ENCODE measurements at regions of chr17 and their contacts with region 1.

Region 1: GRCh38 chr17:57995076-57995956 is 7.3 kb upstream of the VEZF1 start:
- DNase-seq: peak; percentile 73 to 74
- H3K4me3 ChIP-seq: no peak overlapping the region
- H3K27ac ChIP-seq: no peak overlapping the region
- H3K4me1 ChIP-seq: peaks cover 0 to 16% of the 10 kb centered on the region in 2 donors
- H3K27me3 ChIP-seq: no peaks in the 10 kb centered on the region
- CTCF ChIP-seq: peak in 5 of 6 experiments; percentile 62 to 89 (median 74)
- POLR2A ChIP-seq: no peak

Region 2: GRCh38 chr17:57629470-57629869 is 365.8 kb before region 1 on chr17:
- intact Hi-C with region 1: no loop called
- DNase-seq: no peak
- H3K4me3 ChIP-seq: no peak overlapping the region
- H3K27ac ChIP-seq: no peak overlapping the region
- H3K4me1 ChIP-seq: no peaks in the 10 kb centered on the region
- H3K27me3 ChIP-seq: no peaks in the 10 kb centered on the region
- CTCF ChIP-seq: no peak
- POLR2A ChIP-seq: no peak

Region 3: DNA sequence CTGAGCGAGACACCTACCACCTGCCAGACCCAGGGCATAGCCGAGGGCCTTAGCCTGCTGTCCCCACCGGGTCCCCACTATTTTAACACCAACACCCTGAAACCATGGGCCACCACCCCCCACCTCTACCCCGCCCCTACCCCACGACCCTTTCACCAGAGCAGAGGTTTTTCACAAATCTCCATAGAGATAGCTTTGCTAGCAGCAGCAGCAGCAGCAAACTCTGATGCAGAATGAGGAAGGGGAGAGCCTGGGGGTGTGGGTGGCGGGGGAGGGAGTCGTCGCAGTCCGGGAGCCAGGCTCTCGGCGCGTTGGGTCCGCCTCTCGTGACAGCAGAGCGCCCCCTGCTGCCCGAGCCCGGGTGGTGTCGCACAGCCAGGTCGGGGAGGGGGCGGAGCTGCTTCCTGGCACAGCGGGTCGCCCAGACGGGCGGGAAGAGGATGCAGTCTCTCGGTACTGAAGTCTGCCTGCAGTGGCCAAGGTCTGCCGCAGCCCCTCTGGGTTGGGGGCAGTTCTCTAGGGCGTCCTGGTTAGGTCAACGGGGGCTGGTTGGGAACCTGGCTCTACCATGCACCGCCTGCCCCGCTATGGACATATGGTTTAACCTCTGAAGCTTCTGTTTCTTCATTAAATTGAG is 212.1 kb before region 1 on chr17:
- intact Hi-C with region 1: no loop called
- DNase-seq: peak; percentile 63 to 67
- H3K4me3 ChIP-seq: no peak overlapping the region
- H3K27ac ChIP-seq: no peak overlapping the region
- H3K4me1 ChIP-seq: peaks cover 8 to 9% of the 10 kb centered on the region in 2 donors
- H3K27me3 ChIP-seq: no peaks in the 10 kb centered on the region
- CTCF ChIP-seq: peak in 5 of 6 experiments; percentile 50 to 89 (median 67)
- POLR2A ChIP-seq: no peak

Region 4: DNA sequence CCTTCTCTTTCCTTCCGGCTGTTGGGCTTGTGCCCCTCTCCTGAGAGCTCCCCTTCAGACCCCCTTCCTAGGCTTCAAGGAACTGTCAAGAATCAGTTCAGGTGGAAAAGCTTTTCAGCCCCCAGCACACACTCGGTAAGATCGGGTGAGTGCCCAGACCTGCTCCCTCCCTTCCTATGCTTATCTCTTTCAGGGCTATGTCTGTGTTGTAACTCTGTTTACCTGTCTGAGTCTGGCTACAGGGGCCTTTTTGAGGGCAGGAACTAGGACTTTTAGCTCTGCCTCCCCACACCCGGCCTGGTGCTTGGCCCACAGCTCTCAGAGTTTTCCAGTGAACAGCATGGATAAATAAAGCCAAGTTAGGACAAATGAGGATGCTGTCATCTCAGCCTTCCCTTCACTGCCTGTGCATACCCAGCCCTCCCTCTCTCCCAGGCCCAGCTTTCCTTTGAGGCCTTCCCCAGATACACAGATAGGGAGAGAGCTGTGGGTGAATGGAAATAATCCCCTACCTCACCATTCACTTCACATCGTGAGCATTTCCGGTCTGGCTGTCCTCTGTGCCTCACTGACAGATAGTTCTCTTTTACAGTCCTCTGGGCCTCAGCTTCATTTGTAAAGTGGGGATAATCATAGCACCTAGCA is 139.8 kb before region 1 on chr17:
- intact Hi-C with region 1: loop called (anchors 5 kb)
- DNase-seq: no peak
- H3K4me3 ChIP-seq: no peak overlapping the region
- H3K27ac ChIP-seq: no peak overlapping the region
- H3K4me1 ChIP-seq: peaks cover 7 to 36% of the 10 kb centered on the region in 2 donors
- H3K27me3 ChIP-seq: no peaks in the 10 kb centered on the region
- CTCF ChIP-seq: no peak
- POLR2A ChIP-seq: no peak

Region 5: DNA sequence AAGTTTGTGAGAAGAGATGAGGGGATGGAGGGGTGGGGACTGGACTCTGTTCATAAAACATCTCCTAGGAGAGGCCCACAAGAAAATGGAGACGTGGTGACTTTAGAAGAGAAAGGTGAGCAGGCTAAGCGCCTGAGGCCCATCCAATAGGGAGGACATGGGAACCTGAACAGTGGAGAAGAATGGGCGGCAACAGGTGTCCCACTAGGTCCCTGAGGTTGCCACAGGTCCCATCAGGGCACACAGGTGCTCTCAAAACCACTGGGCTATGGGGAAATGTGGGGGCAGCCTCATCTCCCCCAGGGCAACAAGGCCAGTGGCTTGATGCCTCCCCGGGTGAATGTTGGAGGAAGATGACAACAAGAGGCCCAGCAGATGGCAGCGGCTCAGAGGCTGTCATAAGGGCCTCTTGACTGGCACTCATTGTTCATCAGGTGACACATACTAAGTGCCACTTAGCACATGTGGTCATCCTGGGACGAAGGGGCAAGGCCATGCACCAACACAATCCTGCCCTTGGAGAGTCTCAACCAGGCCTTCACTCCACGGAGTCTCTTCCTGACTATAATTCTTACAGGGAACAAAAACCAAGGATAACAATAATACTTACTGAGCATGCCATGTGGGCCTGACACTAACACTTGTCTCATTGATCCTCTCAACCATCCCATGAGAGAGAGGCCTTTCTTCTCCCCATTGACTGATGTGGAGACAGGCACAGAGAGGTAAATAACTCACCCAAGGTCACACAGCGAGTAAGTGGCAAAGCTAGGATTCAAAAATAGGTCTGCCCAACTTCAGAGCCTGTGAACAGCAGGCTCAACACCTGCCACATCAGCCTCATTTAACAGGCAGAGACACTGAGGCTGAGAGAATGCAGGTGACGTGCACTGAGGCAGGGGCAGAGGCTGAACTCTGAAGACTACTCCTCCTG is 78.1 kb before region 1 on chr17:
- intact Hi-C with region 1: no loop called
- DNase-seq: peak; percentile 84 to 87
- H3K4me3 ChIP-seq: no peak overlapping the region
- H3K27ac ChIP-seq: peak overlapping the region; percentile 85 to 91 (median 87)
- H3K4me1 ChIP-seq: peaks cover 85 to 93% of the 10 kb centered on the region in 2 donors
- H3K27me3 ChIP-seq: no peaks in the 10 kb centered on the region
- CTCF ChIP-seq: peak in 3 of 6 experiments; percentile 6 to 26 (median 18)
- POLR2A ChIP-seq: peak in 1 of 2 donors; percentile 27

Measured in thyroid gland (tissue), 4 donors.